ENCODE measurements at regions of chr2 and their contacts with region 1.

Region 1: DNA sequence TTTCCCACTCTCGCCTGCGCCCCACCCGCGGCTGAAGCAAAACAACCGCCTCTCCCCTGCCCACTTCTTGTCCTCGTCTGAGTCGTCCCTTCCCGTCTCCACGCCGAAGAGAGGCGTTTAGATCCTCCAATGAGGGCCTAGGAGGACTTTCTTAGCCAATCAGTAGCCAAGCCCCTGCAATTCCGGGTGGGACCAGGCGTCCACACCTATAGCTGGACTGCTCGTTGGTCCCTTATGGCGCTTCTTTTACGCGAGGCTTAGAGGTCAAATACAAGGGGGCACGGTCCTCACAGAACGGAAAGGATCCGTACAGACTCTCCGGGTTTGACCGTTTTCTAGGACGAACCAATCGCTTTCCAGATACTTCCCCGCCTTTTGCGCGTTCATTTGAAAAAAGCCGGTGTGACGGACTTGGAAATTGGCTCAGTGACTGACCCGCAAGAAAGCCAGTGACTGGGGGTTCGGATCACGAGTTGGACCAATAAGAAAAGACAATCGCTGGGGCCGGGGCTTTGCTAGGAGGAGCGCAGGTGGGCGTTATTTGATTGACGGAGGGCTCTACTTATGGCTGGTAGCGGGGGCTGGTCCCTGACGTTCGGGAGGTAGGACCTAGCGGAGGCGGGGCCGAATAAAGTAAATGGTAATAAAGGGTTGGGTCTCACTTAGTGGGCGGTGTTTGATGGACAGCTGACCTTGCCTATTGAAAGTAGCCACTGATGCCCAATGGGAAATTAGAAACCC is 565 bp upstream of the PPM1B start:
- DNase-seq: peak; percentile 78 to 100 (median 99)
- ATAC-seq: peak; percentile 87
- H3K4me3 ChIP-seq: peak overlapping the region; percentile 80
- H3K4me3 Mint-ChIP-seq: peak overlapping the region; percentile 92 to 100 (median 96)
- H3K27ac ChIP-seq: peak overlapping the region; percentile 96
- H3K27ac Mint-ChIP-seq: peak overlapping the region; percentile 99 to 100 (median 100)
- H3K4me1 ChIP-seq: peaks cover 16 to 28% of the 10 kb centered on the region in 2 donors
- H3K4me1 Mint-ChIP-seq: peaks cover 29 to 38% (median 35%) of the 10 kb centered on the region in 7 donors
- H3K27me3 ChIP-seq: no peaks in the 10 kb centered on the region
- H3K27me3 Mint-ChIP-seq: no peaks in the 10 kb centered on the region

Region 2: GRCh38 chr2:43595603-43596412 is 572.3 kb before region 1 on chr2 and contains the start of gene THADA:
- CTCF ChIA-PET with region 1: no interaction called
- POLR2A ChIA-PET with region 1: no interaction called
- intact Hi-C with region 1: loop called (anchors 1 to 2 kb)
- DNase-seq: peak; percentile 83 to 94 (median 91)
- ATAC-seq: peak; percentile 98
- H3K4me3 ChIP-seq: peak within 1 kb of the TSS; percentile 79
- H3K4me3 Mint-ChIP-seq: peak within 1 kb of the TSS; percentile 82 to 96 (median 94)
- H3K27ac ChIP-seq: peak within 1 kb of the TSS; percentile 87
- H3K27ac Mint-ChIP-seq: peak within 1 kb of the TSS; percentile 90 to 98 (median 97)
- H3K4me1 ChIP-seq: peaks cover 9 to 13% of the 10 kb centered on the region in 2 donors
- H3K4me1 Mint-ChIP-seq: peaks cover 23 to 48% (median 38%) of the 10 kb centered on the region in 7 donors
- H3K27me3 ChIP-seq: no peaks in the 10 kb centered on the region
- H3K27me3 Mint-ChIP-seq: peaks cover 0 to 6% (median 3%) of the 10 kb centered on the region in 5 donors
- total RNA-seq, gene THADA: 34.1 to 43.0 (median 41.0) TPM

Region 3: GRCh38 chr2:43995733-43996533 is 172.2 kb before region 1 on chr2 and contains the start of gene LRPPRC:
- CTCF ChIA-PET with region 1: no interaction called
- POLR2A ChIA-PET with region 1: no interaction called
- intact Hi-C with region 1: loop called (anchors 1 kb)
- DNase-seq: peak; percentile 69 to 95 (median 90)
- ATAC-seq: peak; percentile 98
- H3K4me3 ChIP-seq: peak within 1 kb of the TSS; percentile 98
- H3K4me3 Mint-ChIP-seq: peak within 1 kb of the TSS; percentile 89 to 99 (median 90)
- H3K27ac ChIP-seq: peak within 1 kb of the TSS; percentile 84
- H3K27ac Mint-ChIP-seq: peak within 1 kb of the TSS; percentile 95 to 100 (median 97)
- H3K4me1 ChIP-seq: peaks cover 9 to 25% of the 10 kb centered on the region in 2 donors
- H3K4me1 Mint-ChIP-seq: peaks cover 34 to 62% (median 52%) of the 10 kb centered on the region in 7 donors
- H3K27me3 ChIP-seq: no peaks in the 10 kb centered on the region
- H3K27me3 Mint-ChIP-seq: peaks cover 0 to 1% (median 0%) of the 10 kb centered on the region in 5 donors
- total RNA-seq, gene LRPPRC: 54.3 to 92.7 (median 71.2) TPM

Region 4: GRCh38 chr2:44051593-44052347 is 116.3 kb before region 1 on chr2:
- CTCF ChIA-PET with region 1: no interaction called
- POLR2A ChIA-PET with region 1: no interaction called
- intact Hi-C with region 1: no loop called
- DNase-seq: no peak
- ATAC-seq: no peak
- H3K4me3 ChIP-seq: no peak overlapping the region
- H3K4me3 Mint-ChIP-seq: no peak overlapping the region
- H3K27ac ChIP-seq: no peak overlapping the region
- H3K27ac Mint-ChIP-seq: no peak overlapping the region
- H3K4me1 ChIP-seq: no peaks in the 10 kb centered on the region
- H3K4me1 Mint-ChIP-seq: peaks cover 0 to 1% (median 0%) of the 10 kb centered on the region in 7 donors
- H3K27me3 ChIP-seq: no peaks in the 10 kb centered on the region
- H3K27me3 Mint-ChIP-seq: no peaks in the 10 kb centered on the region

Region 5: GRCh38 chr2:44120428-44120827 is 47.7 kb before region 1 on chr2:
- CTCF ChIA-PET with region 1: no interaction called
- POLR2A ChIA-PET with region 1: interaction called, 16 read pairs
- intact Hi-C with region 1: loop called in 1 of 2 experiments (anchors 1 kb)
- DNase-seq: peak in 8 of 9 donors; percentile 27 to 82 (median 54)
- ATAC-seq: peak; percentile 84
- H3K4me3 ChIP-seq: no peak overlapping the region
- H3K4me3 Mint-ChIP-seq: peak overlapping the region in 6 of 10 donors; percentile 16 to 71 (median 50)
- H3K27ac ChIP-seq: no peak overlapping the region
- H3K27ac Mint-ChIP-seq: peak overlapping the region in 2 of 9 donors; percentile 20 to 46
- H3K4me1 ChIP-seq: peaks cover 5 to 7% of the 10 kb centered on the region in 2 donors
- H3K4me1 Mint-ChIP-seq: peaks cover 8 to 39% (median 20%) of the 10 kb centered on the region in 7 donors
- H3K27me3 ChIP-seq: no peaks in the 10 kb centered on the region
- H3K27me3 Mint-ChIP-seq: peaks cover 0 to 6% (median 0%) of the 10 kb centered on the region in 5 donors

Region 6: DNA sequence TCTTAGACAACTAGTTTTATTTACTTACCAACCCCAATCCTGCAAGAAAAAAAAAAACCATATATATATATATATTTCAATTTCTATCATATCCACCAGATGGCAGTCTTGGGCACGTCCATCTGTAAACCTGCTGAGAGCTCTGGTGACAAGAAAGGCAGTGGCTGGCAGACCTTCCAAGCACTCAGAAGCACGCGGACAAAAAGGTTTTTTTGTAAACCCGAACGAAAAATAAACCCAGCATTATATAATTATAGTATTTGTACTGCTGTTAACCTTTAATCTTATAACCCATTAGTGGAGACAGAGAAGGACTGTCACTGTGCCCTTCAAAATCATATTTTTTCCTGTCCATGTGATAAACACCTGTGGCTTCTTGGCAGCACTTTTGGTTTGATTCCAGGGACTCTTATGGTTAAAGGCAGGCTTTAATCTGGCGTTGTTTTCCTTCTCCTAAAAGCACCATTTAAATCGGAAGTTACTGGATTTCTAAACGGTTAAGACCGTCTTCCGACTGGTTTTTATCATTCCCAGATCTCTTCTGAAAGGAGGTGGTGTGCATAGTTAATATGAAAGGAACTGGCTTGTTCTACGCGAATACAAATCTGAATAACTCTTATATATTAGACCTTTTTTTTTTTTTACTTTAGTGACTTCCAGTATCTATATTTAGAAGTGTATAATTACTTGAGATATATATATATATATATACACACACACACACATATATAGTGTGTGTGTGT is 76.2 kb after region 1 on chr2:
- CTCF ChIA-PET with region 1: interaction called, 4 read pairs
- POLR2A ChIA-PET with region 1: interaction called, 7 read pairs
- intact Hi-C with region 1: loop called (anchors 1 to 2 kb)
- DNase-seq: peak; percentile 12 to 75 (median 64)
- ATAC-seq: peak; percentile 96
- H3K4me3 ChIP-seq: peak overlapping the region; percentile 55
- H3K4me3 Mint-ChIP-seq: peak overlapping the region; percentile 71 to 95 (median 87)
- H3K27ac ChIP-seq: peak overlapping the region; percentile 64
- H3K27ac Mint-ChIP-seq: peak overlapping the region in 8 of 9 donors; percentile 39 to 89 (median 74)
- H3K4me1 ChIP-seq: peaks cover 6 to 9% of the 10 kb centered on the region in 2 donors
- H3K4me1 Mint-ChIP-seq: peaks cover 7 to 41% (median 33%) of the 10 kb centered on the region in 7 donors
- H3K27me3 ChIP-seq: no peaks in the 10 kb centered on the region
- H3K27me3 Mint-ChIP-seq: peaks cover 0 to 7% (median 0%) of the 10 kb centered on the region in 5 donors

Region 7: GRCh38 chr2:44479122-44479887 is 311.2 kb after region 1 on chr2:
- CTCF ChIA-PET with region 1: no interaction called
- POLR2A ChIA-PET with region 1: no interaction called
- intact Hi-C with region 1: loop called in 1 of 2 experiments (anchors 5 kb)
- DNase-seq: peak in 8 of 9 donors; percentile 23 to 79 (median 68)
- ATAC-seq: peak; percentile 100
- H3K4me3 ChIP-seq: no peak overlapping the region
- H3K4me3 Mint-ChIP-seq: peak overlapping the region in 1 of 10 donors; percentile 8
- H3K27ac ChIP-seq: no peak overlapping the region
- H3K27ac Mint-ChIP-seq: peak overlapping the region in 5 of 9 donors; percentile 5 to 55 (median 38)
- H3K4me1 ChIP-seq: peaks cover 0 to 4% of the 10 kb centered on the region in 2 donors
- H3K4me1 Mint-ChIP-seq: peaks cover 0 to 11% (median 6%) of the 10 kb centered on the region in 7 donors
- H3K27me3 ChIP-seq: no peaks in the 10 kb centered on the region
- H3K27me3 Mint-ChIP-seq: no peaks in the 10 kb centered on the region

Region 8: GRCh38 chr2:45611020-45611737 is 1443.1 kb after region 1 on chr2 and contains the start of gene SRBD1:
- CTCF ChIA-PET with region 1: no interaction called
- POLR2A ChIA-PET with region 1: no interaction called
- intact Hi-C with region 1: loop called in 1 of 2 experiments (anchors 2 kb)
- DNase-seq: peak; percentile 52 to 91 (median 75)
- ATAC-seq: peak; percentile 91
- H3K4me3 ChIP-seq: peak within 1 kb of the TSS; percentile 79
- H3K4me3 Mint-ChIP-seq: peak within 1 kb of the TSS; percentile 92 to 99 (median 96)
- H3K27ac ChIP-seq: peak within 1 kb of the TSS; percentile 78
- H3K27ac Mint-ChIP-seq: peak within 1 kb of the TSS; percentile 90 to 98 (median 96)
- H3K4me1 ChIP-seq: peaks cover 0 to 7% of the 10 kb centered on the region in 2 donors
- H3K4me1 Mint-ChIP-seq: peaks cover 13 to 47% (median 28%) of the 10 kb centered on the region in 7 donors
- H3K27me3 ChIP-seq: no peaks in the 10 kb centered on the region
- H3K27me3 Mint-ChIP-seq: no peaks in the 10 kb centered on the region
- total RNA-seq, gene SRBD1: 17.7 to 28.1 (median 23.3) TPM